ENCODE measurements at regions of chr18 and their contacts with region 1.

Region 1: GRCh38 chr18:40148960-40149359 is 1806.1 kb upstream of the PIK3C3 start:
- DNase-seq: no peak
- H3K4me3 ChIP-seq: no peak overlapping the region
- H3K27ac ChIP-seq: no peak overlapping the region
- H3K4me1 ChIP-seq: no peaks in the 10 kb centered on the region; a peak in 1 of 4 replicates
- H3K27me3 ChIP-seq: no peaks in the 10 kb centered on the region
- CTCF ChIP-seq: no peak
- EP300 ChIP-seq: no peak
- RAD21 ChIP-seq: peak; percentile 13; the same call in 1 of the 2 replicates

Region 2: GRCh38 chr18:39870586-39870985 is 278.4 kb before region 1 on chr18:
- CTCF ChIA-PET with region 1: no interaction called
- POLR2A ChIA-PET with region 1: no interaction called
- DNase-seq: no peak
- H3K4me3 ChIP-seq: no peak overlapping the region
- H3K27ac ChIP-seq: no peak overlapping the region
- H3K4me1 ChIP-seq: no peaks in the 10 kb centered on the region
- H3K27me3 ChIP-seq: no peaks in the 10 kb centered on the region
- CTCF ChIP-seq: no peak
- EP300 ChIP-seq: no peak
- RAD21 ChIP-seq: no peak

Region 3: GRCh38 chr18:40159141-40160017 is 10.4 kb after region 1 on chr18:
- CTCF ChIA-PET with region 1: interaction called, 14 read pairs
- POLR2A ChIA-PET with region 1: no interaction called
- DNase-seq: peak; percentile 27
- H3K4me3 ChIP-seq: no peak overlapping the region
- H3K27ac ChIP-seq: no peak overlapping the region
- H3K4me1 ChIP-seq: no peaks in the 10 kb centered on the region
- H3K27me3 ChIP-seq: no peaks in the 10 kb centered on the region
- CTCF ChIP-seq: peak; percentile 62
- EP300 ChIP-seq: no peak
- RAD21 ChIP-seq: peak; percentile 82

Measured in SK-N-SH (cell line).